ENCODE measurements at regions of chr14 and their contacts with region 1.

Region 1: DNA sequence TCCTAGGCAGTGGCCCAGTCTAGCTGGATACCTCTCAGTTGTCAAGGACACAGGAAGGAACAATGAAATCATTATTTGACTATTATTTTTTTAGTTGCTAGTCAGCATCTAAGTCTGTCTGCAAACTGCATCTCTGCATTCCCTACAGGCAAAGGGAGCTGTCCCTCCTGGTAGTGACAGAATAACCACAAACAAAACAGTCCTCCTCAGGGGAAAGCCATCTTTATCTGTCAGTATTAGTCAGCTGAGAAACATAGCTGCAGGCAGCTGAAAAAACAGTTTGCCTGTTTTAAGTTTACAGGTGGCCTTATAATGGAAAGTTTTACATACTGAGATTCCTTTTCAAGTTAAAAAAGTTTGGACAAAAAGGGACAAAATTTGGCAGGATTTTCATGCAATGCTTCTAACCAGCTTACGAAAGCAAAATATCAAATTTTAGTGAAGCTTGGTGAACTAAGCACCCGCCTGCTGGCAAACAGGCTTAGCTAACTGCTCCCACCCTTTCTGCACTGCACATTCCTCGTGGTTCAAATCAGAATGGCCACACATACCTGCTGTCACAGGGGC is 29.5 kb downstream of the SLC25A21 start:
- ATAC-seq: peak in 7 of 8 experiments; percentile 36 to 99 (median 80)
- H3K4me3 ChIP-seq: no peak overlapping the region
- H3K27ac ChIP-seq: no peak overlapping the region
- H3K4me1 ChIP-seq: no peaks in the 10 kb centered on the region

Region 2: DNA sequence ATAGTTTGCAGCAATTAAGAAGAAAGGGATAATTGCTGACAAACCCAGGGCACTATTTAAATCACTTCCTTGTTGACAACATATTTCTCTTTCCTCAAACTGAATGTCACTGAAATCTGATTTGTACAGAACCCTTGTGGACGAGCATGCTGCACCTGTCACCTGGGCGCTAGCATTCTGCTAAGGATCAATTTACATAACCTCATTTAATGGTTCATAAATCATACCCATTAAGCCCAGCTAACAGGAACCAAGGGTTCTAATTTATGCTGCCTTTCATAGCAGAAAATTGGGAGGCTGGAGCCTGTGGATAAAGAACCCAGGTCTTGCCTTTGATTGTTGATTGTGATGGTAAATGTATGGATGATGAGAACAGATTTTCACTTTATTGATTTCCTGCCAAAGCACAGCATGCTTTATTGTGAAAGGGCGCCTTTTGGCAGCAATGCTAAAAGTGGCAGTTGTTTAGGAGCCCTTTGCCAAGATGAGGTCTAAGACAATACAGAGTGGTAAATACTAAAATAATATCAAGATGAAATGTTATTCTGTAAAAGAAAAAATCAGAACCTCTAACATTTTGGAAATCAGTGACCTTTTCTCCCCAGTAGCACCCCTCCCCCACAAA is 718.3 kb before region 1 on chr14:
- in situ Hi-C with region 1: no loop called
- ATAC-seq: no peak
- H3K4me3 ChIP-seq: no peak overlapping the region
- H3K27ac ChIP-seq: no peak overlapping the region
- H3K4me1 ChIP-seq: peaks cover 9 to 10% of the 10 kb centered on the region in 2 donors

Region 3: GRCh38 chr14:36647824-36648753 is 494.8 kb before region 1 on chr14:
- in situ Hi-C with region 1: loop called in 2 of 9 experiments (anchors 25 kb)
- ATAC-seq: peak; percentile 82 to 89 (median 85)
- H3K4me3 ChIP-seq: peak overlapping the region; percentile 26 to 52 (median 40)
- H3K27ac ChIP-seq: no peak overlapping the region
- H3K4me1 ChIP-seq: no peaks in the 10 kb centered on the region

Region 4: GRCh38 chr14:36773136-36773540 is 369.8 kb before region 1 on chr14:
- in situ Hi-C with region 1: loop called in 1 of 9 experiments (anchors 25 kb)
- ATAC-seq: peak in 5 of 8 experiments; percentile 31 to 97 (median 65)
- H3K4me3 ChIP-seq: no peak overlapping the region
- H3K27ac ChIP-seq: no peak overlapping the region
- H3K4me1 ChIP-seq: peaks cover 0 to 6% of the 10 kb centered on the region in 2 donors

Region 5: GRCh38 chr14:36941783-36942521 is 201.0 kb before region 1 on chr14:
- in situ Hi-C with region 1: loop called in 1 of 9 experiments (anchors 25 kb)
- ATAC-seq: peak in 7 of 8 experiments; percentile 11 to 84 (median 50)
- H3K4me3 ChIP-seq: no peak overlapping the region
- H3K27ac ChIP-seq: no peak overlapping the region
- H3K4me1 ChIP-seq: no peaks in the 10 kb centered on the region

Region 6: DNA sequence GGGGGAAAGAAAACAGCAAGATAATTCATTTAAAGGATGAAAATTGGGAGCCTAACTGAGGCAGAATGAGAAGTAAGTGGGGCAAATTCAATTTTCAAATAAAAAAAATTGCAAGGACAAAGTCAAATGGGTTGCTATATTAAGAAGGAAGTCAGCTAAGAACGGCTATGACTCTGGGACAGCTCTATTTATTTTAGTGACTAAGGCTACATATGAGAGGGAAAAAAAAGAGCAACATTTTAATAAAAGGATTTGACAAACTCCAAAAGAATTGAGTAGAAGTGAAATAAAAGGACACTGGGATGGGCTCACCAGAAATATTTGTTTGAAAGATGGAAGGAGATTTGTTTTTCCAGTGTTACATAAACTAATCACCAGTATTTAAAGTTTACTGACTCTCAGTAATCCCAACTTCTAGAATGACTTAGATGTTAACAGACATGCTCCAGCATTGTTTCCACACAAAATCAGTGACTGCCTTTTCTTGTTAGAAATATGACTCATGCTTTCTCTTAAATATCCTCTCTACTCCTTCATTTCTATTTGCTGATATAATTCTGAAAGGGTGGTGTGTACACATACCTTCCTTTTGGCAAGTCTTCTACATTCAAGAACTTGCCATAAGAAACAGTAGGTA is 169.0 kb before region 1 on chr14:
- in situ Hi-C with region 1: loop called in 1 of 9 experiments (anchors 25 kb)
- ATAC-seq: peak in 2 of 8 experiments; percentile 69 to 78
- H3K4me3 ChIP-seq: no peak overlapping the region
- H3K27ac ChIP-seq: no peak overlapping the region
- H3K4me1 ChIP-seq: no peaks in the 10 kb centered on the region

Region 7: GRCh38 chr14:37428946-37429345 is 286.0 kb after region 1 on chr14:
- in situ Hi-C with region 1: no loop called
- ATAC-seq: no peak
- H3K4me3 ChIP-seq: no peak overlapping the region
- H3K27ac ChIP-seq: no peak overlapping the region
- H3K4me1 ChIP-seq: no peaks in the 10 kb centered on the region

Region 8: GRCh38 chr14:37501877-37502276 is 359.0 kb after region 1 on chr14:
- in situ Hi-C with region 1: no loop called
- ATAC-seq: no peak
- H3K4me3 ChIP-seq: no peak overlapping the region
- H3K27ac ChIP-seq: no peak overlapping the region
- H3K4me1 ChIP-seq: no peaks in the 10 kb centered on the region